PC-9 (cell line): ENCODE measurements at regions of chr1 and their contacts with region 1.

Region 1: DNA sequence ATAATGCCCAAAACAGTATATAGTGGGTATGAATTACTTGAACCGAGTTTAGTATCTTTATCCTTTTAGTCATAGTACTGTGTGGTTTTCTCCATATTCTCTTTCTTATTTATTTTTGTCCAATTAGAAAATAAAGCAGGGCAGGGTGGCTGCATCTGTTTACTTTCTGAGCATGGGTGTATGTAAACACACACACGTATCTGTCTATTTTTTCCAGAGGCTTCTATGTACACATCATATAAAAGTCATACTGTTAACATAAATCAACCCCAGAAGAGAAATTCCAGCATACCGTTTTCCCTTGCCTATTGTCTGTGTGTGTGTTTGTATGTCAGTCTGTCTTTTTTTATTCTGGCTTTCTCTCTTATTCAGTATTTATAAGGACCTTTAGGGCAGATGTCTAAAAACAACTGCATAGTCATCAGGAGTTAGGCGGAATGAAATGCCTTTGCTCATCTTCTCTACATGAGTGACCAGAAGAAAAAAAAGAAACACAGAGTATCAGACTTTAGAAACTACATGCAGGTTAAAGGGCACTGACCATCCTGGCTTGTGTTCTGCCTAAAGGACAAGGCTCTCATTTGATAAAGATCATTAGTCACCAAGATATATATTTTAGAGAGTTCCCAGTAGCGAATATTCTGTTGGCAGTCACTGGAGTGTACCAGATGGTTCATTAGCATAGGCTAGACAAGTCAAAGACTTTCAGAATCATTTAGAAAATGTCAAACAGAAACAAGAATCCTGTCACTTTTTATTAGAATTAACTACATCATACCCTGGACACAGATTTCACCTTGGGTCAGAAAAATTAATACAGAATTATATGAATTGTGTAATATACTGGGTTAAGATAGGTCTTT is 145.5 kb downstream of the NR5A2 start:
- DNase-seq: no peak
- H3K4me3 ChIP-seq: no peak overlapping the region
- H3K27ac ChIP-seq: no peak overlapping the region
- H3K4me1 ChIP-seq: no peaks in the 10 kb centered on the region
- H3K27me3 ChIP-seq: no peaks in the 10 kb centered on the region
- CTCF ChIP-seq: no peak

Region 2: GRCh38 chr1:199046618-199047017 is 1126.4 kb before region 1 on chr1:
- CTCF ChIA-PET with region 1: no interaction called
- POLR2A ChIA-PET with region 1: no interaction called
- intact Hi-C with region 1: no loop called
- DNase-seq: no peak
- H3K4me3 ChIP-seq: no peak overlapping the region
- H3K27ac ChIP-seq: no peak overlapping the region
- H3K4me1 ChIP-seq: no peaks in the 10 kb centered on the region
- H3K27me3 ChIP-seq: no peaks in the 10 kb centered on the region
- CTCF ChIP-seq: no peak

Region 3: DNA sequence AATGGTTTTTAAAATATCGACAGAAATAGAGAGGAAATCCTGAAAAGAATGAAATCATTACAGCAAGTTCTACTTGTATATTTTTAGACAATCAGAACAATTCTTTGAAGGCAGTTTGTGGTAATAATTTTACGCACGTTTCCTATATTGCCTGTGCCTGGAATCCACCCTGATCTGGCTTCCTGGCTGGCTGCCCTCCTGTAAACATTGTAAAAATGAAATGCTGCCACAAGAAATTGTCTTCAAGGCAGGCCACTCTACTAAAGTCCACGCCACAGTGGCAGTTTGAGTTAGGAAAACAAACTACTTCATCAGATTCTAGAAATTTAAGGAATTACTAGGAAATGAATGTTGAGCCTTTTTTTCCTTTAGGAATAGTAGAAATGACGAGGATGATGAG is 599.9 kb before region 1 on chr1:
- CTCF ChIA-PET with region 1: no interaction called
- POLR2A ChIA-PET with region 1: no interaction called
- intact Hi-C with region 1: no loop called
- DNase-seq: no peak
- H3K4me3 ChIP-seq: no peak overlapping the region
- H3K27ac ChIP-seq: no peak overlapping the region
- H3K4me1 ChIP-seq: no peaks in the 10 kb centered on the region
- H3K27me3 ChIP-seq: no peaks in the 10 kb centered on the region
- CTCF ChIP-seq: no peak

Region 4: DNA sequence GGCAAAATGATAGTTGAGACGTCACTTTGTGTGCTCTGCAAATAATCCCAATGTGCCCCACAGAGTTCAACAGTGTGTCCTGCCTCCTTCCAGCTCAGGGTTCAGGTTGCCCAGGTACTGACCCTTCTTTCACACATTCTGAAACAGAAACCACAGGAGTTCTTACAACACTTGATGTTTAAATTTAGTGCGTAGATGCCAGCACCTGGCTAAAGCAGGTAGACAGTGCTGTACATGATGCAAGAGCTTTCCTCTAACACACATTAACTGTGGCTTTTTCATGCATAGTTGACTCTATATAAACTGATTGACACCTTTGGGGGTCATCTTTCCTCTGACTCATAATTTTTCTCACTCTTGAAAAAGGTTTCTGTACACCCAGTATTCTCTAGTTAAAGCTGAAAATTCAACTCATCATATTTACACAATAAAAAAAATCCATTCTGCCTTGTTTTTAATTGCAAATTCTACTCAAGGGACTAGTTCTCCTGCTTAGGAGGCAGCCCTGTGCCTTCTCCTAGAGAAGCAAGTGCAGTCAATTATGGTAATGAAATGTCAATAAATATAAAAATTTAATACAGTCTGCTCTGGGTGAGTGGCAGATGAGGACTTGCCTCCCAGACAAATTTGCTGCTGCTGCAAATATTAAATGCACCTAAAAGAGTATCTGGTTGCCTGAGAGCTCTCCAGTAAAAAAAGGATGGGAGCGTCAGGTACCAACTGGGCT is 54.0 kb before region 1 on chr1:
- CTCF ChIA-PET with region 1: interaction called, 10 read pairs
- POLR2A ChIA-PET with region 1: no interaction called
- intact Hi-C with region 1: no loop called
- DNase-seq: peak in 1 of 2 experiments; percentile 91
- H3K4me3 ChIP-seq: no peak overlapping the region
- H3K27ac ChIP-seq: peak overlapping the region; percentile 62
- H3K4me1 ChIP-seq: peaks cover 31% of the 10 kb centered on the region
- H3K27me3 ChIP-seq: no peaks in the 10 kb centered on the region
- CTCF ChIP-seq: no peak

Region 5: DNA sequence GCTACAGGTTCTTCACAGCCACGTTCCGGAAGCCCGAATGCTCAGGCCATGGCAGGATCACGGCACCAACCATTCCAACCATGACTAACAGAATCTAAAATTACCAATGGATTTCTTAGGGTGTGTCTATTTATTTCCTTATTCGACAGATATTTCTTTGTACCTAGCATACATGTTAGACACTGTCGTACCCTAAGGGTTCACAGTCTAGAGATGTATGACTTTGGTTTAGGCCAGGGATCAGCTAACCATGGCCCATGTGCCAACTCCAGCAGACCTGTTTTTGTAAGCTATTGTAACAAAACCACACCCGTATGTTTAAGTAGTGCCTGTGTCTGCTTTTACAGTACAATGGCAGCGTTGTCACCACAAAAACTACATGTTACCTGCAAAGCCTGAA is 21.5 kb after region 1 on chr1:
- CTCF ChIA-PET with region 1: no interaction called
- POLR2A ChIA-PET with region 1: no interaction called
- intact Hi-C with region 1: no loop called
- DNase-seq: no peak
- H3K4me3 ChIP-seq: no peak overlapping the region
- H3K27ac ChIP-seq: no peak overlapping the region
- H3K4me1 ChIP-seq: no peaks in the 10 kb centered on the region
- H3K27me3 ChIP-seq: no peaks in the 10 kb centered on the region
- CTCF ChIP-seq: no peak